Activated CD4-positive, alpha-beta memory T cell treated with anti-CD3 and anti-CD28 coated beads for 36 hours (primary cell): ENCODE measurements at regions of chr6 and their contacts with region 1.

Region 1: DNA sequence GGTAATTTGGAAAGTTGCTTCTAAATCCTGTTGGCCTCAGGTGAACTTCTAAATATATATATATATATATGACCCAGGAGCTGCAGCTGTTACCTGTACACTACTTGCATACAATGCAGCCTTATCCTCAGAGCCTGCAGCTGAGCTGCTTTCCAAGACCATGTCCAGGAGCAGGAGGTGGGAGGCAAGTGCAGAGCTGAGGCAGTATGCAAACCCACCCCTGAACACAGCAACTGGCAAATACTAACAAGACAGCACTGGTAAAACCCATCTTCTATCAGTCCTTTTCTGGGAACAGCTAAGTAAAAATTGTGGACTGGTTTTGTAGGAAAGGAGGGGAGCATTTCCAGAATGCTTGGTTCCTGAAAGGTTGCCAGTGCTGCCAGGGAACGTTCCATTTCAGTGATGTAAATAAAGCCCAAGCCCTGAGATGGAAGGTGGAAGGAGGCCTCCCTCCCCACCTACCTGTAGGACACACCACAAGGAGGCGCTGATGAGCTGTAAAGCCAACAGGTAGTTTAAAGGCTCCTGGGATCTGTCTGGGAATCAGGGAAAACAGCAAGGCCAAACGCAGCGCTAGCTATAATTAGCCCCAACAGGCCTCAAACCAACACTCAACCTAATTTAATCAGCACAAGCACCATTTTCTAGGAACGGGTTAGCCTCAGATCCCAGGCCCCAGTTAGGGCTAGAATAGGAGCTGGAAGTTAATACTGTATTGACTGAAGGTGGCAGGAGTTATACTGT is 93.8 kb upstream of the MAP7 start:
- DNase-seq: peak; percentile 85
- H3K4me3 Mint-ChIP-seq: no peak overlapping the region
- H3K27ac Mint-ChIP-seq: no peak overlapping the region
- H3K4me1 Mint-ChIP-seq: no peaks in the 10 kb centered on the region
- H3K27me3 Mint-ChIP-seq: no peaks in the 10 kb centered on the region

Region 2: DNA sequence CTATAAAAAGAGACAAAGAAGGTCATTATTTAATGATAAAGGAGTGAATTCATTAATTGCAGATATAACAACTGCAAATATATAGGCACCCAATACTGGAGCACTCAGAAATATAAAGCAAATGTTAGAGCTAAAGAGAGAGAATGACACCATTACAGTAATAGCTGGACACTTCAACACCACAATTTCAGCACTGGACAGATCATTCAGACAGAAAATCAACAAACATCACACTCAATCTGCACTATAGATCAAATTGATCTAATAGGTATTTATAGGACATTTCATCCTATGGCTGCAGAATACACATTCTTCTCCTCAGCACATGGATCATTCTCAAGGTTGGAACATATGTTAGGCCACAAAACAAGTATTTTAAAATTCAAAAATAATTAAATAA is 166.5 kb before region 1 on chr6:
- CTCF ChIA-PET with region 1: no interaction called
- POLR2A ChIA-PET with region 1: no interaction called
- intact Hi-C with region 1: no loop called
- DNase-seq: no peak
- H3K4me3 Mint-ChIP-seq: no peak overlapping the region
- H3K27ac Mint-ChIP-seq: no peak overlapping the region
- H3K4me1 Mint-ChIP-seq: no peaks in the 10 kb centered on the region
- H3K27me3 Mint-ChIP-seq: peaks cover 6% of the 10 kb centered on the region

Region 3: DNA sequence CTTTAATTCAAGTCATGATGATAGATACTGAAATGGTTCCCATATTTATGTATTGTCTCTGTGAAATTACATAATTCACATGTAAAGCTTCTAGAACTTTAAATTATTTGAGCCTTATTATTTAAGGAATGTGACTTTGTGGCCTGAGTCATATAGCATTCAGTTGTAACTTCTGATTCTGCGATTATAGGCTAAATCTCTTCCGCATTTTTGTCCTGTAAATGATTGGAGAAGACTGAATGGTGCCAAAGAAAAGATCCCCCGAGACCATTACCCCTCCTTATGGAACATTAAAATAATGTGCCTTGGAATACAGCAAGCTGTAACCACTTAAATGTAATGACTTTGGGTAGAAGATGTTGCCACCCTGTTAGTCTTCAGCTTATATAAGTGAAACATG is 30.5 kb before region 1 on chr6:
- CTCF ChIA-PET with region 1: interaction called, 14 read pairs
- POLR2A ChIA-PET with region 1: no interaction called
- intact Hi-C with region 1: loop called (anchors 5 kb)
- DNase-seq: no peak
- H3K4me3 Mint-ChIP-seq: no peak overlapping the region
- H3K27ac Mint-ChIP-seq: no peak overlapping the region
- H3K4me1 Mint-ChIP-seq: peaks cover 10% of the 10 kb centered on the region
- H3K27me3 Mint-ChIP-seq: no peaks in the 10 kb centered on the region

Region 4: GRCh38 chr6:136669299-136669699 is 25.3 kb after region 1 on chr6:
- CTCF ChIA-PET with region 1: interaction called, 16 read pairs
- POLR2A ChIA-PET with region 1: no interaction called
- intact Hi-C with region 1: no loop called
- DNase-seq: no peak
- H3K4me3 Mint-ChIP-seq: no peak overlapping the region
- H3K27ac Mint-ChIP-seq: no peak overlapping the region
- H3K4me1 Mint-ChIP-seq: peaks cover 2% of the 10 kb centered on the region
- H3K27me3 Mint-ChIP-seq: no peaks in the 10 kb centered on the region

Region 5: GRCh38 chr6:136729832-136730231 is 85.8 kb after region 1 on chr6:
- CTCF ChIA-PET with region 1: no interaction called
- POLR2A ChIA-PET with region 1: no interaction called
- intact Hi-C with region 1: no loop called
- DNase-seq: no peak
- H3K4me3 Mint-ChIP-seq: no peak overlapping the region
- H3K27ac Mint-ChIP-seq: no peak overlapping the region
- H3K4me1 Mint-ChIP-seq: peaks cover 36% of the 10 kb centered on the region
- H3K27me3 Mint-ChIP-seq: no peaks in the 10 kb centered on the region

Region 6: GRCh38 chr6:136751522-136751956 is 107.5 kb after region 1 on chr6:
- CTCF ChIA-PET with region 1: interaction called, 9 read pairs
- POLR2A ChIA-PET with region 1: no interaction called
- intact Hi-C with region 1: loop called (anchors 1 kb)
- DNase-seq: peak; percentile 52
- H3K4me3 Mint-ChIP-seq: peak overlapping the region; percentile 25
- H3K27ac Mint-ChIP-seq: peak overlapping the region; percentile 74
- H3K4me1 Mint-ChIP-seq: peaks cover 87% of the 10 kb centered on the region
- H3K27me3 Mint-ChIP-seq: no peaks in the 10 kb centered on the region

Region 7: GRCh38 chr6:136798031-136798430 is 154.0 kb after region 1 on chr6:
- CTCF ChIA-PET with region 1: interaction called, 624 read pairs
- POLR2A ChIA-PET with region 1: interaction called, 71 read pairs
- intact Hi-C with region 1: loop called (anchors 1 kb)
- DNase-seq: no peak
- H3K4me3 Mint-ChIP-seq: no peak overlapping the region
- H3K27ac Mint-ChIP-seq: no peak overlapping the region
- H3K4me1 Mint-ChIP-seq: peaks cover 6% of the 10 kb centered on the region
- H3K27me3 Mint-ChIP-seq: peaks cover 5% of the 10 kb centered on the region

Region 8: GRCh38 chr6:136927292-136927691 is 283.3 kb after region 1 on chr6:
- CTCF ChIA-PET with region 1: interaction called, 9 read pairs
- POLR2A ChIA-PET with region 1: no interaction called
- intact Hi-C with region 1: loop called (anchors 10 kb)
- DNase-seq: peak; percentile 39
- H3K4me3 Mint-ChIP-seq: no peak overlapping the region
- H3K27ac Mint-ChIP-seq: no peak overlapping the region
- H3K4me1 Mint-ChIP-seq: peaks cover 9% of the 10 kb centered on the region
- H3K27me3 Mint-ChIP-seq: peaks cover 31% of the 10 kb centered on the region